ENCODE measurements at regions of chr7 and their contacts with region 1.

Region 1: GRCh38 chr7:130926001-130926691 is 192.1 kb upstream of the KLF14 start:
- DNase-seq: peak; percentile 80
- H3K4me3 Mint-ChIP-seq: peak overlapping the region; percentile 66
- H3K27ac Mint-ChIP-seq: peak overlapping the region; percentile 82
- H3K4me1 Mint-ChIP-seq: peaks cover 68% of the 10 kb centered on the region
- H3K27me3 Mint-ChIP-seq: no peaks in the 10 kb centered on the region

Region 2: GRCh38 chr7:130875265-130875741 is 50.8 kb before region 1 on chr7:
- intact Hi-C with region 1: no loop called
- DNase-seq: peak; percentile 82
- H3K4me3 Mint-ChIP-seq: no peak overlapping the region
- H3K27ac Mint-ChIP-seq: no peak overlapping the region
- H3K4me1 Mint-ChIP-seq: peaks cover 35% of the 10 kb centered on the region
- H3K27me3 Mint-ChIP-seq: no peaks in the 10 kb centered on the region

Region 3: DNA sequence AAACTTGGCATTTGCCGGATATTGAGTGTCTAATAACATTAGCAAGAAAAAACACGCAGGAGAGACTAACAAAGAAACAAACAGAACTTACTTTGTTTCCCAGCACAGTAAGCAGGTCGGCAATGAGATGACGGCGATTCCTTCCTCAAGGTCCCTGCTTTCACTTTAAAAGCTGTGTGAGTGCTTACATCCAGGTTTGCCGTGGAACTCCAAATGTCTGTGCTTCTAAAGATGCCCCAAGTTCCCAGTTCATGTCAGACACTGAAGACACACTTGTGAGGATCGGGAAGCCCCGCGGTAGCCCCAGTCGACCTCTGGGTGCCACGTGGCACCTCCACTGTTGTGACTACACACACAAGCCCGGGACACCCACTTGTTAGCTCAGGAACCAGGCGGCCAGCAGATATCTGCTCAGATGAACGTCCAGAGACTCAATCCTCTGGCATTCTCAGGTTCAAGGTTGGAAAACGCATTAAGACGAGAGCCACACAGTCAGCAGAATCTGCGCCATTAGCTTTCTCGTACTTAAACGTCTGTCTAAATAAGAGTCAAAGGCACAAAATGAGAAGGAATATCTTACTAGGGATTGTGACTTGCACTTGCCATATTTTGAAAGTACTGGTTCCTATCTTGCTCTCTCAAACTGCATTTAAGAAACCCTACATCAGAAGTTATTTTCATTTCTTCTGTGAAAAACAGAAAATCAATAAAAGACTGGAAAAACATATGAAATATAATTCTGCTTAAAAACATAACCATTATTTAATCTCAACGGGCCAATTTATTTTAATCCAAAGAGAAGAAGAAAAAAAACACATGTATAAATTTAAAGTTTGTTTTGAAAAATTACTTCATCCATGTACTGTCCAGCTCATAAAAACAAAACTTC is 15.4 kb after region 1 on chr7:
- intact Hi-C with region 1: loop called (anchors 2 kb)
- DNase-seq: peak; percentile 69
- H3K4me3 Mint-ChIP-seq: peak overlapping the region; percentile 86
- H3K27ac Mint-ChIP-seq: peak overlapping the region; percentile 90
- H3K4me1 Mint-ChIP-seq: peaks cover 80% of the 10 kb centered on the region
- H3K27me3 Mint-ChIP-seq: no peaks in the 10 kb centered on the region

Region 4: DNA sequence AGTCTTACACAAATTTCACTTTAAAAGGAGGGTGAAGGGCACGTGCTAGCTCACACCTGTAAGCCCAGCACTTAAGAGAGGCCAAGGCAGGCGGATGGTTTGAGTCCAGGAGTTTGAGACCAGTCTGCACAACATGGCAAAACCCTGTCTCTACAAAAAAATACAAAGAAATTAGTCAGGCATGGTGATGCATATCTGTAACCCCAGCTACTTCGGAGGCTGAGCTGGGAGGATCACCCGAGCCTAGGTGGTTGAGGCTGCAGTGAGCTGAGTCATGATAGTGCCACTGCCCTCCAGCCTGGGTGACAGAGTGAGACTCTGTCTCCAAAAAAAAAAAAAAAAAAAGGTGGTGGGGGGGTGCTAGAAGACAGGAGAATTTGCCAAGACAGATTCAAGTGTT is 45.2 kb after region 1 on chr7:
- intact Hi-C with region 1: no loop called
- DNase-seq: no peak
- H3K4me3 Mint-ChIP-seq: peak overlapping the region; percentile 64
- H3K27ac Mint-ChIP-seq: peak overlapping the region; percentile 96
- H3K4me1 Mint-ChIP-seq: peaks cover 58% of the 10 kb centered on the region
- H3K27me3 Mint-ChIP-seq: no peaks in the 10 kb centered on the region

Measured in activated CD4-positive, alpha-beta T cell treated with anti-CD3 and anti-CD28 coated beads, Interleukin-2, amount 10 ng/mL, durations not matched to agents 24 days and 14 days (primary cell).